ENCODE measurements at regions of chr11 and their contacts with region 1.

Region 1: GRCh38 chr11:59802639-59803176 is 7.9 kb downstream of the MRPL16 start:
- DNase-seq: no peak
- ATAC-seq: peak; percentile 76 to 84
- H3K4me3 ChIP-seq: no peak overlapping the region
- H3K27ac ChIP-seq: no peak overlapping the region
- H3K4me1 ChIP-seq: no peaks in the 10 kb centered on the region
- H3K27me3 ChIP-seq: no peaks in the 10 kb centered on the region
- CTCF ChIP-seq: peak; percentile 73

Region 2: DNA sequence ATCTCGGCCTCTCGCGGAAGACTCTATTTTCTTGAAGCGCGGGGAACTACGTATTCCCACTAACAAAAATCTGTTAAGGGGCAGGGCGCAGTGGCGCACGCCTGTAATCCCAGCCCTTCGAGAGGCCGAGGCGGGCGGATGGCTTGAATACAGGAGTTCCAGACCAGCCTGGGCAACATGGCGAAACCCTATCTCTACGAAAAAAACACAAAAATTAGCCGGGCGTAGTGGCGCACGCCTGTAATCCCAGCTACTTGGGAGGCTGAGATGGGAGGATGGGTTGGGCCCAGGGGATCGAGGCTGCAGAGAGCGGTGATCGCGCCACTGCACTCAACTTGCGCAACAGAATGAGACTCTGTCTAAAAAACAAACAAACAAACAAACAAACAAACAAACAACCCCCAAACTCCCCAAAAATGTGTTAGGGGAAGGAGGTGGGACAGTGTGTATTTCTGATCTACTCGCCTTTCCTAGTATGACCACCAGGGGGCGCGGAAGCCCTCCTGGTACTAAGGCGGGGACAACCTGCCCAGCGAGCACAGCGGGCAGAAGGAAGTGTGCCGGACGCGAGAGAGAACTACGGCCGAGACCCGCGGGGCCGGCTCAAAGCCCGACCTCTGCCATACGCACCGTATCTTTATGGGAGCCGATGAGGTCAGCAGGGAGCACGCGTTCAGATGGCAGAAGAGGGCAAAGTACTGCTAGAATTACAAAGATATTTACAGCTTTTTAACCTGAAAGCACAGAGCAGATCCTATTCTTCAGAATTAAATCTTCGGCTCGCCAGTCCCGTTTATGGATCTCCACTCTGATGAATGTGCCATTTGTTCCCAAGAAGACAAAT is 48.8 kb before region 1 on chr11:
- intact Hi-C with region 1: loop called (anchors 10 kb)
- DNase-seq: peak; percentile 92
- ATAC-seq: peak; percentile 74 to 88
- H3K4me3 ChIP-seq: peak overlapping the region; percentile 98
- H3K27ac ChIP-seq: peak overlapping the region; percentile 96
- H3K4me1 ChIP-seq: peaks cover 24% of the 10 kb centered on the region
- H3K27me3 ChIP-seq: no peaks in the 10 kb centered on the region
- CTCF ChIP-seq: peak; percentile 94

Region 3: GRCh38 chr11:59767225-59767611 is 35.5 kb before region 1 on chr11:
- intact Hi-C with region 1: no loop called
- DNase-seq: no peak
- ATAC-seq: peak; percentile 24 to 46
- H3K4me3 ChIP-seq: no peak overlapping the region
- H3K27ac ChIP-seq: no peak overlapping the region
- H3K4me1 ChIP-seq: peaks cover 80% of the 10 kb centered on the region
- H3K27me3 ChIP-seq: no peaks in the 10 kb centered on the region
- CTCF ChIP-seq: no peak

Measured in lower lobe of right lung (tissue), 2 donors.